ENCODE measurements at regions of chr10 and their contacts with region 1.

Region 1: GRCh38 chr10:104406715-104407650 is 53.4 kb downstream of the CFAP58 start:
- DNase-seq: no peak

Region 2: GRCh38 chr10:104309976-104310674 is 96.9 kb before region 1 on chr10:
- intact Hi-C with region 1: no loop called
- DNase-seq: peak; percentile 89

Region 3: DNA sequence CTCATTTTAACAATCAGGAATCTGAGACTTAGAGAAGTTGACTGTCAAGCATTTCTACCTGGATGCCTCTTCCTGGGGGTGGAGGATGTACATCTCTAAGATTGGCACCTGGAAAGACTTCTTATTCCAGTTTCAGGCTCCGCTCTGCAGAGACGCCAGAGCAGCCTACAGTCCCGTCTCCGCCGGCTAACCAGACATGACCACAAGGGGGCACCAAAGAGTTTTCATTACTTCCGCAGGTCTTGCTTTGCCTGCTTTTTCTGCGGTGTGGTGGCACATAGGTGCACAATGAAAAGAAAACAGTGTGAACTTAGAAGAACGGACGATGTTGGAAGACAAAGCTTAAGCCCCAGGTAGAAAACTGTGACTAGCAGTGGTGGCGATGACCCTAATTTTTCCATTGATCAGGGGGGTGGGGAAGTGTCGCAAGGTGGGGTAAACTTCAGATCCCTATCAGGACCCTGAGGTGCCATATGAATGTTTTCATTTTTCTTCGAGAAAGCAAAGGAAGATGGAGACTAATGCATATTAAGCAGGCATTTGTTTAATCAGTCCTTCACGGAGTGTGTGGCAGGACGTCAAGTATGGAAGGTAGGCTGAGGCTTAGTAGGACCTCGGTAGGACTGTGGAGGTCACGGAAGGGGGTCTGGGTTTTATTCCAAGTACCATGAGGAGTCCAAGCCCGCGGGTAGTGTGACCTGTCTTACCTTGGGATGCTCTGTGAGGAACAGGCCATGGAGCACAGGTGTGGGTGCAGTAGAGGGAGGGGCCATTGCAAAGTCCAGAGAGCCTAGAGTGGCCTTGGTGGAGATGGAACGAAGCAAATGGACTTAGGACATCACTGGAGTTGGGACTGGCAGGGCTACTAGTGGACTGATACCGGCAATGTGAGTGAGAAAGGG is 174.0 kb after region 1 on chr10:
- intact Hi-C with region 1: loop called (anchors 5 kb)
- DNase-seq: peak; percentile 82

Region 4: GRCh38 chr10:104925232-104925851 is 518.4 kb after region 1 on chr10:
- intact Hi-C with region 1: loop called (anchors 10 kb)
- DNase-seq: no peak

Measured in cardiac septum (tissue), 1 donor.